ENCODE measurements at regions of chr16 and their contacts with region 1.

Region 1: DNA sequence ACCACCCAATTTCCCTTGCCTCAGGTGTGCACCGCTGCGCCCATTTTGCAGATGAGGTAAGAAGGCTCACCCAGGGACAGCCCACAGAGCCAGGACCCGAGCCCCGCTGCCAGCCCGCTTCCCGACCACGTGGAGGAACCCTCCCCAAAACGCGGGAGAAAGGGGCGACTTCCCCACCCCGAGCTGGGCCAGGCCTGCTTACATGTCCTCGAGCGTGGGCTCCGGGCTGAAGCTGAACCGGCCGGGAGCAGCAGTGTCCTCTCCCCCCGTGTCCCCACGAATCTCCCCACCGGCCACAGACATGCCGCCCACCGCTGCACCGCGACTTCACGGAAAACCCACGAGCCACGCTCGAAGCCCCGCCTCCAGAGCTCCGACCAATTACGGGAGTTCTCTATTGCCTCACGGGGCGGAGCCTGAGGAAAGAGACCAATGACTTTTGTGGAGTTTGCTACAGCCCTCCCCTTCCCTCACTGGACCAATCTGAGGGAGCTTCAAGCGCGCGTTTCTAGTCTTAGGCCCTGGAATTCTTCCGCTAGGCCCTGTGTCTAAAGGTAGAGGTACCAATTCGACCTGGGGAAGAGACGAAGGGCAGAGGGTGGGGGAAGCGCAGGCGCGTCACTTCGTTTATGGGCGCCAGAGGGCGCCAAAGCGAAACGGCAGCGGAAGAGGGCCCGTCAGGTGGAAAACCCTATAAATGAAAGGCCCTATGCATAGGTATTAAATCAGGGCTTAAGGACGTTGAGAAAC is at the start of gene DCTPP1:
- DNase-seq: peak; percentile 100
- ATAC-seq: peak; percentile 98
- H3K4me3 ChIP-seq: peak within 1 kb of the TSS; percentile 62 to 84 (median 78)
- H3K27ac ChIP-seq: peak within 1 kb of the TSS; percentile 55
- H3K4me1 ChIP-seq: peaks cover 56% of the 10 kb centered on the region
- H3K27me3 ChIP-seq: peaks cover 0 to 3% of the 10 kb centered on the region in 2 experiments; a peak in 2 of 5 replicates
- CTCF ChIP-seq: peak; percentile 93
- EP300 ChIP-seq: peak in 1 of 2 experiments; percentile 42; a peak in 2 of 4 replicates
- POLR2A ChIP-seq: peak; percentile 26 to 78; a peak in 3 of 4 replicates
- RAD21 ChIP-seq: peak; percentile 98
- total RNA-seq, gene DCTPP1: 74.4 and 105 TPM in 2 replicates

Region 2: GRCh38 chr16:30370444-30371247 is 59.2 kb before region 1 on chr16 and contains the start of gene TBC1D10B:
- CTCF ChIA-PET with region 1: no interaction called
- POLR2A ChIA-PET with region 1: interaction called, 16 read pairs
- in situ Hi-C with region 1: no loop called
- intact Hi-C with region 1: no loop called
- DNase-seq: peak; percentile 100
- ATAC-seq: peak; percentile 88
- H3K4me3 ChIP-seq: peak within 1 kb of the TSS; percentile 80 to 90 (median 86)
- H3K27ac ChIP-seq: peak within 1 kb of the TSS; percentile 51
- H3K4me1 ChIP-seq: peaks cover 45% of the 10 kb centered on the region
- H3K27me3 ChIP-seq: no peaks in the 10 kb centered on the region; a peak in 1 of 5 replicates
- CTCF ChIP-seq: peak; percentile 75
- EP300 ChIP-seq: no peak
- POLR2A ChIP-seq: peak; percentile 40 to 77; a peak in 2 of 4 replicates
- RAD21 ChIP-seq: peak; percentile 71; the same call in 1 of the 2 replicates
- total RNA-seq, gene TBC1D10B: 20.8 and 24.8 TPM in 2 replicates

Region 3: GRCh38 chr16:30407102-30407803 is 22.6 kb before region 1 on chr16 and contains the start of gene ZNF771:
- CTCF ChIA-PET with region 1: interaction called, 4 read pairs
- POLR2A ChIA-PET with region 1: interaction called, 24 read pairs
- in situ Hi-C with region 1: no loop called
- intact Hi-C with region 1: no loop called
- DNase-seq: peak; percentile 84
- ATAC-seq: peak; percentile 88
- H3K4me3 ChIP-seq: peak within 1 kb of the TSS; percentile 87 to 96 (median 91)
- H3K27ac ChIP-seq: peak within 1 kb of the TSS; percentile 85
- H3K4me1 ChIP-seq: peaks cover 39% of the 10 kb centered on the region
- H3K27me3 ChIP-seq: no peaks in the 10 kb centered on the region
- CTCF ChIP-seq: peak; percentile 54
- EP300 ChIP-seq: no peak
- POLR2A ChIP-seq: peak; percentile 91 to 92
- RAD21 ChIP-seq: peak; percentile 75
- total RNA-seq, gene ZNF771: 10.9 and 11.8 TPM in 2 replicates

Region 4: GRCh38 chr16:30526823-30527635 is 97.2 kb after region 1 on chr16:
- CTCF ChIA-PET with region 1: no interaction called
- POLR2A ChIA-PET with region 1: interaction called, 19 read pairs
- in situ Hi-C with region 1: no loop called
- intact Hi-C with region 1: loop called (anchors 2 kb)
- DNase-seq: peak; percentile 97
- ATAC-seq: peak; percentile 89
- H3K4me3 ChIP-seq: peak overlapping the region; percentile 78 to 97 (median 87)
- H3K27ac ChIP-seq: peak overlapping the region; percentile 98
- H3K4me1 ChIP-seq: peaks cover 61% of the 10 kb centered on the region
- H3K27me3 ChIP-seq: no peaks in the 10 kb centered on the region; a peak in 1 of 5 replicates
- CTCF ChIP-seq: peak; percentile 54
- EP300 ChIP-seq: peak in 1 of 2 experiments; percentile 31; a peak in 1 of 4 replicates
- POLR2A ChIP-seq: peak; percentile 70 to 76
- RAD21 ChIP-seq: peak; percentile 75

Region 5: DNA sequence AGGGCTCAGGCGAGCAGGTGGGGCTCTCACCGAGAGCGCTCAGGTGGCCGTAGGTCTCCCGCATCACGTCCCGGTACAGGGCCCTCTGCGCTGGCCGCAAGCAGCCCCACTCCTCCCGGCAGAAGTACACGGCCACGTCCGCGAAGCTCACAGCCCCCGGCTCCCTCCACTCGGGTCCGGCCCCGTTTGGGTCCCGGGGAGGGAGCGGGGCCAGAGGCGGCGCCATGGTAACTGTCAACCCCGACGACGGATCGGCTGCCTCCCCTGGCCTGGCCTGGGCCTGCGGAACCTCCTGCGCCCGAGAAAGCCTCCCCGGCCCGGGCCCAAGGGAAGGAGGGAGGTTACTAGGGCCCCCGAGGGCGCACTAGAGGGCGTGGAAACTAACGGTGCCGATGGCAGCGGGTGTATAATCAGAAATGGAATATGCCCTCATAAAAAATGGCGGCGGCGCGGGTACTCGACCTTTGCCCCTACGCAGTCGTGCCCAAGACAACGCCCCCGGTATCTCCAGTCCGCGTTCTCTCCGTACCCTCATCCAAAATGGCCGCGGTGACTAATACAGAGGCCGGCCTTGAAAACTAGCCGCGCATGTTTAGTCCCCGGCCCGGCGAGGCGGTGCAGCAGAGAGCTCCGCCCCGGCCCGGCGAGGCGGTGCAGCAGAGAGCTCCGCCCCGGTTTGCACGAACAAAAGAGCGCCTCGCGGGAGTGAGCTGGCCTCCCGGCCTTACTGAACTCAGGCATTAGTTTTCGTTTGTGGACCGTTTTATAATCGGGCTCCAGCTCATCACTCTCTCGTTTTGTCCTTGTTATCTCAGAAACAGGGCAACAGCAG is 128.3 kb after region 1 on chr16 and contains the start of gene ZNF764:
- CTCF ChIA-PET with region 1: no interaction called
- POLR2A ChIA-PET with region 1: interaction called, 38 read pairs
- in situ Hi-C with region 1: no loop called
- intact Hi-C with region 1: no loop called
- DNase-seq: peak; percentile 99
- ATAC-seq: peak; percentile 95
- H3K4me3 ChIP-seq: peak within 1 kb of the TSS; percentile 73 to 82 (median 82)
- H3K27ac ChIP-seq: peak within 1 kb of the TSS; percentile 95
- H3K4me1 ChIP-seq: peaks cover 40% of the 10 kb centered on the region
- H3K27me3 ChIP-seq: no peaks in the 10 kb centered on the region
- CTCF ChIP-seq: no peak; the same call in none of the 2 replicates
- EP300 ChIP-seq: peak in 1 of 2 experiments; percentile 38; a peak in 2 of 4 replicates
- POLR2A ChIP-seq: peak; percentile 80 to 90
- RAD21 ChIP-seq: peak; percentile 47
- total RNA-seq, gene ZNF764: 7.3 and 9.1 TPM in 2 replicates

Region 6: DNA sequence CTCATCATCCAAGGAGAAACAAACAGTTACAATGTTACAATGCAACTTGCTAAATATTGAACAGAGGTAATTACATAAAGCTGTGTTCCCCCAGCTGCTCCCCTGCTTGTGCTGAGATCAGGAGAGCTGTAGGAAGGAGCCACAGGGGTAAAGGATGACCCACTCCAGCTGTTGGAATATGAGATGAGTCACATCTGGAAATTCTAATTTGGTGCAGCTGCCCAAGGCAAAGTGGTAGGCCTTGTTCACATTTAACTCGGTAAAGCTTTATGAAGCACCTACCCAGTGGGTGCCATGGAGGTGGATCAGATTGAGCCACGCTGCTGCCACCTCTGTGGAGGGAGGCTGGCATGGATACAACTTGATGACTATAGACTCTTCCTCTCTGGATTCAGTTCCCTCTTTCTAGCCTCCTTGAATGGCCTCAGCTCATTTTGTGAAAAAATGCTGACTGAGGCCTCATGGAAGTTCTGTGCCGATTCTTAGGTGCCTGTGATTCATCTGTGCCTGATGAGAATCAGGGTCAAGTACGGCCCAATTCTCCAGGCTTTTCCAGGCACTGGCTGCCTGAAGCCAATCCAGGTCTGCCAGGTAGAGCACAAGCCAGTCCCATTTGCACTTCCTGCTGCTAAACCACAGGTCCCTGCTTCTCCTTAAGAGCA is 172.9 kb after region 1 on chr16:
- CTCF ChIA-PET with region 1: interaction called, 13 read pairs
- POLR2A ChIA-PET with region 1: interaction called, 8 read pairs
- in situ Hi-C with region 1: loop called (anchors 10 kb)
- intact Hi-C with region 1: loop called (anchors 1 kb)
- DNase-seq: no peak
- ATAC-seq: no peak
- H3K4me3 ChIP-seq: no peak overlapping the region
- H3K27ac ChIP-seq: no peak overlapping the region
- H3K4me1 ChIP-seq: peaks cover 27% of the 10 kb centered on the region
- H3K27me3 ChIP-seq: no peaks in the 10 kb centered on the region
- CTCF ChIP-seq: no peak
- EP300 ChIP-seq: no peak
- POLR2A ChIP-seq: 0 out of 4 replicates have a peak, but pooled peaks of 1 of the 2 experiments have one; percentile 29
- RAD21 ChIP-seq: no peak

Region 7: DNA sequence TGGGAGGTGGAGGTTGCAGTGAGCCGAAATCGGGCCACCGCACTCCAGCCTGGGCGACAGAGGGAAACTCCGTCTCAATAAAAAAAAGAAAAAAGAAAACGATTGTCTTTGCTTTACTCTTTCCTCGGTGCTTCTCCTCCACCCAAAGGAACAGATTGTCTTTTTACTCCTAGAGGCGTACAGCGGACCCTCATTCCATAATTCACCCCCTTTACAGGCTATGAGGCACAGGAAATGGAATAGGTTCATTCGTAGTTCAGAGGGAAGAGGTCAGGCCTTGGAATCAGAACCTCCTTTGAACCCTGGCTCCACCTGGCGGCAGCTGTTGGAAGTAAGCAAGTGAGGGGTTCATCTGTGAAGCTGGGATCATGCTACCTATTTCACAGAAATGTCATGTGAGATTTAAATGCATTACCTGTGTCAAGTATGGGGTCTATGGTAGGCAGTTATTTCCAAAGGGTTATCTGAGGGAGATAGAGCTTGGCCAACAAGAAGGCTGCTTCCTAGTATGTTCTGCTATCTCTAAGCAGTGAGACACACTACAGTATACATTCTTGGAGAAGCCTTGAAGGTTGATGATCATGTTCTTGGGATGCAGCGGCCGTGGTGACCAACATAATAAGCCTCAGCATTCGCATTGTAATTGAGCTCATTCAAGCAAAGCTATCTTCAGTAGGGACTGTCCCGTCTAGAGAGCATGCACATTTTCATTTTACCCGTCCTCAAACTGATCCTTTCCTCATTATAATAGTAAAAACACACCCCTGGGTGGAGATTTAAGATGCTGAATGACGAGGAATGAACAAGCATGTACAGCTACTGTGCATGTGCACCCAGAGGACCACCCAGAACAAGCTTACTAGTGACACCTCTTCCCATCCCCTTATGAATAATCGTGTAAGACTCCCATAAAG is 199.0 kb after region 1 on chr16:
- CTCF ChIA-PET with region 1: interaction called, 8 read pairs
- POLR2A ChIA-PET with region 1: interaction called, 9 read pairs
- in situ Hi-C with region 1: no loop called
- intact Hi-C with region 1: loop called (anchors 2 kb)
- DNase-seq: peak; percentile 81
- ATAC-seq: peak; percentile 83
- H3K4me3 ChIP-seq: peak overlapping the region in 2 of 3 experiments; percentile 18 to 40; a peak in 3 of 6 replicates
- H3K27ac ChIP-seq: no peak overlapping the region
- H3K4me1 ChIP-seq: peaks cover 46% of the 10 kb centered on the region
- H3K27me3 ChIP-seq: no peaks in the 10 kb centered on the region
- CTCF ChIP-seq: peak; percentile 94
- EP300 ChIP-seq: no peak
- POLR2A ChIP-seq: no peak
- RAD21 ChIP-seq: peak; percentile 80